Esophagus squamous epithelium (tissue), 5 donors: ENCODE measurements at regions of chr11 and their contacts with region 1.

Region 1: GRCh38 chr11:128165572-128165971 is 421.8 kb downstream of the ETS1 start:
- DNase-seq: no peak
- H3K4me3 ChIP-seq: no peak overlapping the region
- H3K27ac ChIP-seq: no peak overlapping the region
- H3K4me1 ChIP-seq: no peaks in the 10 kb centered on the region
- H3K27me3 ChIP-seq: peaks cover 0 to 10% (median 0%) of the 10 kb centered on the region in 4 donors
- CTCF ChIP-seq: no peak
- POLR2A ChIP-seq: no peak

Region 2: GRCh38 chr11:128835741-128836430 is 670.3 kb after region 1 on chr11:
- intact Hi-C with region 1: loop called (anchors 5 kb)
- DNase-seq: no peak
- H3K4me3 ChIP-seq: no peak overlapping the region
- H3K27ac ChIP-seq: peak overlapping the region in 2 of 4 donors; percentile 14 to 28
- H3K4me1 ChIP-seq: peaks cover 0 to 16% (median 0%) of the 10 kb centered on the region in 3 donors
- H3K27me3 ChIP-seq: peaks cover 0 to 3% (median 0%) of the 10 kb centered on the region in 4 donors
- CTCF ChIP-seq: no peak
- POLR2A ChIP-seq: no peak